Panc1 (cell line): ENCODE measurements at regions of chr1 and their contacts with region 1.

Region 1: DNA sequence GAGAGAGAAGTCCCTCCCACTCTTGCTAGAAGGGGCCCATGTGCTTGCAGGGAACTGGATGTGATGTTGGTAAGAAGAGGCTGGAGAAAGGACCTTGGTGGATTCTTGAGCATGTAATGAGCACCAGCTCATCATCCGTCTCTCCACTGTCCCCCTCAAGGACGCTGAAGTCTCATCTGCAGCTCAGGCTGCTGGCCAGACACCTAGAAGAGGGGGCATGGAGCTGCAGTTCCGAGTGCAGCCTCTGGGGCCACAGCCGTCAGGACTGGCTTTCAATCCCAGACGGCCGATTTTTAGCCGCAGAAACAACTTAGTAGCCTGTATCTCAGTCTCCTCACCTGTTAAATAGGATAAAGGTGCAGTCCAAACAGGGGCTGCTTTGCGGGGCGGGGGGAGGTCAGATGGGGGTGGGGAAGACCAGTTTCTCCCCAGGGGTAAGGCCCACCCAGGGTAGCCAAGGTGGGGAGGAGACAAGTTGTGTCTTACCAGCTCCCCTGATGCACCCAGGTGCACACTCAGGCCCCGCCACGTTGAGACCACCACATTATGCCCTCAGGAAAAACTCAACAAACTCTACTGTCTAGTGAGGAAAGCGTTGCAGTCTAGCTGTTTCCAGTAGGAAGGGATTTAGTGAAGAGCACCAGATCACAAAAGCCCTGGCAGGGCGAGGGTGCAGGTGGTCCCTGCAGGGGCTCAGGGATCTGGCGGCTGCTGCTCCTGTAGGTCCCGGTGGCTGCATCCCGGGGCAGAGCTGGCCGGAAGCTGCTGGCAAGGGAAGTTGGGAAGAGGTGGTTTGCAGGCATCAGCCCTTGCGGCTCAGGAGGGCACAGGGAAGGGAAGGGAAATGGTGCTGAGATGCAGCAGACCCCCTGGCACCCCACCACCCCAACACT is 29.5 kb downstream of the LDLRAP1 start:
- DNase-seq: peak; percentile 15
- ATAC-seq: peak; percentile 82
- H3K4me3 ChIP-seq: no peak overlapping the region
- H3K27ac ChIP-seq: no peak overlapping the region
- H3K4me1 ChIP-seq: peaks cover 12% of the 10 kb centered on the region
- H3K27me3 ChIP-seq: no peaks in the 10 kb centered on the region
- CTCF ChIP-seq: peak; percentile 85

Region 2: DNA sequence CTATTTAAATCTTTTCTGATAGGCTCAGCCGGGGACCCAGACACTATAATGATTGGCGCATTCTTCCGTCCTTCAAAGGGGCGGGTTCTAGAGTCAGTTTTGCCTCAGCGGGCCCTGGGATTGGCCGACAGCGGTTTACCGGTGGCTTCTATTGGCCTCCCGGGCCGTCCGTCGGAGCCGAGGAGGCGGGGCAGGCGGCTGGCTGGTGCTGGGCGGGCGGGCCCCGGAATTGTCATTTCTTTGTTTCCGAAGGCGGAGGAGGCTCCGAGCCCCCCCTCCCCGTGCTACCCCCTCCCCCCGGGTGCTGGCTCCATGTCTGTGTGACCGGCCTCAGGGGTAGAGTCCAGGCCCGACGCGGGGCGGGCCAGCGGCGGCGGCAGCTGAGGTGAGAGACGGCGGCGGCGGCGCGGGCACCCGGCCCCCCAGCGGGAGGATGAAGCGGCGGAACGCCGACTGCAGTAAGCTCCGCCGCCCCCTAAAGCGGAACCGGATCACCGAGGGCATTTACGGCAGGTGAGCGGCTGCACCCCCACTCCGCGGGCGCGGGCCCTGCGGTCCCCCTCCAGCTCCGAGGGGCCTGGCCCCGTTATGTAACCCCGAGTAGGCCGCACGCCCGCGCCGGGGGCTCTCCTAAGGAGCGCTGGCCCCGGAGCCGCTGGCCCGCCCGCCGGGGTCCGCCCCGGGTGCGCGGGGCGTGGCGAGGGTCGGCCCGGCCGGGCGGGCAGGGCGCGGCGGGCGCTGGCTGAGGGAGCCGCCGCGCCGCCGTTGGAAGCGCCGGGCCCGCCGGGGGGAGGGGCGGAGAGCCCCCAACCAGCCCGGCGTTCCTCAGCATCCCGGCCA is 142.1 kb before region 1 on chr1 and contains the start of gene MACO1:
- CTCF ChIA-PET with region 1: interaction called, 10 read pairs
- POLR2A ChIA-PET with region 1: no interaction called
- in situ Hi-C with region 1: no loop called
- intact Hi-C with region 1: no loop called
- DNase-seq: peak; percentile 92
- ATAC-seq: peak; percentile 96
- H3K4me3 ChIP-seq: peak within 1 kb of the TSS; percentile 73 to 98
- H3K27ac ChIP-seq: peak within 1 kb of the TSS; percentile 87
- H3K4me1 ChIP-seq: peaks cover 31% of the 10 kb centered on the region
- H3K27me3 ChIP-seq: no peaks in the 10 kb centered on the region
- CTCF ChIP-seq: no peak
- total RNA-seq, gene MACO1: 16.5 TPM

Region 3: GRCh38 chr1:25698252-25698651 is 125.3 kb after region 1 on chr1:
- CTCF ChIA-PET with region 1: interaction called, 11 read pairs
- POLR2A ChIA-PET with region 1: no interaction called
- in situ Hi-C with region 1: no loop called
- intact Hi-C with region 1: no loop called
- DNase-seq: no peak
- ATAC-seq: no peak
- H3K4me3 ChIP-seq: no peak overlapping the region
- H3K27ac ChIP-seq: no peak overlapping the region
- H3K4me1 ChIP-seq: no peaks in the 10 kb centered on the region
- H3K27me3 ChIP-seq: no peaks in the 10 kb centered on the region
- CTCF ChIP-seq: no peak

Region 4: DNA sequence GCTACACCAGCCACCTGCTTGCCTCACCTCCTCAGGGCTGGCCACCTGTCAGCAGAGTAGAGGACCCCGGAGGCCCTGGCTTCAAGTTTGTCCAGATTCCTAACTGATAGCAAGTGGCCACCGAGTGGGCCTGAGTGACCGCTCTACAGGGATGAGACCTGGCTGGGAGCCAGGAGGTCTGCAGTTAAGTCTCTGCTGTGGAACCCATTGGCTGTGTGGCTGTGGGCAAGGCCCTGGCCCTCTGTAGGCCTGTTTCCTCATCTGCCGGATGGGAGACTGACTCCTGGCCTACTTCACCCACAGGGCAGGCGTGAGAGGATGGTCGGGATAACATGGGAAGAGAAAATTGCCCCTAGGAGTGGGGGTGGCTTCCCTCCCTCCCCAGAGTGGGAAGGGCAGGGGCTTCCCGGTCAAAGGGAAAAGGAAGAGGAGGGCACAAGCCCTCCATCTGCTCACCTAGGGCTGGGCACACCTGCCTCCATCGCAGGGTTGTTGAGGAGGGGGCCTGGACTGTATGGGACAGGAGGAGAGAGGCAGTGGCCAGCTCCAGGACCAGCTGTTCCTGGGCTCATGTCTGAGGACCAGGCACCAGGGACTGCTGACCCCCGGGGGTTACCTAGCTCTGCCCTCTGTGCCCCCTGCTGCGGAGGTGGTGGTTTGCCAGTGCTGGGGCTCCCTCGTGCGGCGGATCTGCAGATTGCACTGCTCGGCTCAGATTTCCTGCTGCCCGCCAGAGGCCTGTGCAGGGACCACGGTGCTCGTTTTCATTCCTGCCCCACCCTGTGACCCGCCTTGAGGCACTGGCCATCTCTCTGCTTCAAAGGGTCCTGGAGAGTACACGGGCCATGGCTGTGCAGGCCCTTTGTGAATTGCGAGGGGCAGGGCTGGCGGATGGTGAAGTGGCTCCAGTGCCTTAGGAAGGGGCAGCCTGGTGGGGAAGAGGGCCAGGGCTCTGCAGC is 237.7 kb after region 1 on chr1:
- CTCF ChIA-PET with region 1: interaction called, 11 read pairs
- POLR2A ChIA-PET with region 1: no interaction called
- in situ Hi-C with region 1: no loop called
- intact Hi-C with region 1: no loop called
- DNase-seq: peak; percentile 42
- ATAC-seq: peak; percentile 81
- H3K4me3 ChIP-seq: no peak overlapping the region
- H3K27ac ChIP-seq: no peak overlapping the region
- H3K4me1 ChIP-seq: no peaks in the 10 kb centered on the region
- H3K27me3 ChIP-seq: no peaks in the 10 kb centered on the region
- CTCF ChIP-seq: peak; percentile 97